Colonic mucosa (tissue), 4 donors: ENCODE measurements at regions of chr20 and their contacts with region 1.

Region 1: DNA sequence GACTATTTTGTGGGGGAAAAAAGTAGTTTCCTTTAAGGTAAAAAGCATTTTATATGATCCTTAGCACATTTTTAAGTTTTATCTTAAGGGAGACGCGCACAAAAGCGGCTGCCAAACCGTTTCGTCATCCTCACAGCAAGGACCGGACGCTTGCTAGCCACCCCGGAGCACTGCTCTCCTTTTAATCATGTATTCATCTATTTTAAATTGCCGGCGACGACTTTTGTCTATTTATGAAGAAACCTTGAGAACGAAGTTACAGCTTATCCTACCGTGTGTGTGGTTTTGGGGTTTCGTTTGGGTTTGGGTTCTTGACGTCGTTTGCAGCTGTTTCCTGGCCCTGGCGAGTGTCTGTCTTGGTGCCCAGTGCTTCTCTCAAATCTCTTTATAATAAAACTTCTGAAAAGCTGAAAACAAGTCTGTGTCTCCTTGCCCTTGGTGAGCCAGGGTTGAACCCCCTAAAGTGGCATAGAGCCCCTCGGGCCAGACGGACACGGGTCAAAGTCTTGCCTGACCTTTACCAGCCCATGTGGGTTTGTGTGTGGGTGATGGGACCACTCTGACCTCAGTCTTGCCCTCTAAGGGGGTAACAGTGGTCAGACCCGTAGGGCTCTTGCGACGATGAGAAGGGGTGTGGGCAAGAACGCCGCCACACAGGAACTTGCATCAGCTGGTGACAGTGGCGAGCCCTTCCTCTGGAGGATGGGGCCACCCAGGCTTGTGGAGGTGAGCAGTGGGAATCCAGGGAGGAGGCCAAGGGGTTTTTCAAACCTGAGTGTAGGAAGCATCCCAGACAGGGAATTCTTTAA is 117.6 kb downstream of the JPH2 start:
- DNase-seq: no peak
- H3K4me3 ChIP-seq: no peak overlapping the region
- H3K27ac ChIP-seq: peak overlapping the region; percentile 27
- H3K4me1 ChIP-seq: no peaks in the 10 kb centered on the region
- H3K27me3 ChIP-seq: no peaks in the 10 kb centered on the region
- CTCF ChIP-seq: no peak

Region 2: DNA sequence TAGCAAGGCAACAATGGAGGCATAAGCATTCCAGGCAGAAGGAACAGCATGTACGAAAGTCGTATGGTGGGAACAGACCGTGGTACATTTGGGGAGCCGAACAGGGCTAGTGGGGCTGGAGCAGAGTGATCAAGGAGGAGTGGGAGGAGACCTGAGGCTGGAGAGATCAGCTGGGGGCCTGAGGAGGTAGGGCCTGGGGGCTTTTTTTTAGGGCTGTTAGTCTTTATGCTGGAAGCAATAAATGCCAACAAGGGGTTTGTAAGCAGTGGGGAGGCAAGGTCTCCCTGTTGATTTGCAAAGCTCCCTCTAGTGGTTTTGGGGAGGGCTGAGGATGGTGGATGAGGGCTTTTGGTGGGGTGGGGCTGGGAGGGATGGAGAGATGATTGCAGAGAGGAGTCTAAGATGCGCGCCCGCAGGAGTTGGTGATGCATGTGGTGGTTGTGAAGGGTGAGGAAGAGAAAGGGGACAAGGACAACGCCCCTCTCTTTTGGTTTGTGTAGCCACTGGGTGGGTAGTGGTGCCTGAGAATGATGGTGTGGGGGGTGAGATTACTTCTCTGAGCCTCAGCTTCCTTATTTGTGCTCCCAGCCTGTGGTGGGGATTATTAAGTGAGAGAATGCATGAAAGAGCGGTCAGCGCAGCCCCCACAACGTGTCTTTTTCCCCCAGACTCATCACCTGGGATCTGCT is 228.9 kb before region 1 on chr20:
- intact Hi-C with region 1: loop called (anchors 10 kb)
- DNase-seq: peak; percentile 19
- H3K4me3 ChIP-seq: no peak overlapping the region
- H3K27ac ChIP-seq: no peak overlapping the region
- H3K4me1 ChIP-seq: no peaks in the 10 kb centered on the region
- H3K27me3 ChIP-seq: no peaks in the 10 kb centered on the region
- CTCF ChIP-seq: no peak

Region 3: DNA sequence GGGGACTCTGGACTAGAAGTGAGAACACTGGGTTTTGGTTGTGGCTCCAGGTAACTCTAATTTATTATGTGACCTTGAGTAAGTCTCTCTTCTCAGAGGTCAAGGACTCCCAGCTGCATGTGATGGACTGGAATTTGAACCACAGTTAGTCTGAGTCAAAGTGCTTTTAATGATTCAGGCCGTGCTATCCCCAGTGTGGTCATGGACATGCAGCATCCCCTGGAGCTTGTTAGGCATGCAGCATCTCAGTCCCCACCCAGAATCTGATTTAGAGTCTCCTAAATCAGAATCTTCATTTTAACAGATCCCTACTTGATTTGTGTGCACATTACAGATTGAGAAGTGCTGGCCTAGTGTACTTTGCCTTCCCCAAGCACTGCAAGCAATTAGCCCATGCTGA is 80.5 kb before region 1 on chr20:
- intact Hi-C with region 1: no loop called
- DNase-seq: no peak
- H3K4me3 ChIP-seq: no peak overlapping the region
- H3K27ac ChIP-seq: no peak overlapping the region
- H3K4me1 ChIP-seq: peaks cover 4% of the 10 kb centered on the region
- H3K27me3 ChIP-seq: no peaks in the 10 kb centered on the region
- CTCF ChIP-seq: no peak

Region 4: DNA sequence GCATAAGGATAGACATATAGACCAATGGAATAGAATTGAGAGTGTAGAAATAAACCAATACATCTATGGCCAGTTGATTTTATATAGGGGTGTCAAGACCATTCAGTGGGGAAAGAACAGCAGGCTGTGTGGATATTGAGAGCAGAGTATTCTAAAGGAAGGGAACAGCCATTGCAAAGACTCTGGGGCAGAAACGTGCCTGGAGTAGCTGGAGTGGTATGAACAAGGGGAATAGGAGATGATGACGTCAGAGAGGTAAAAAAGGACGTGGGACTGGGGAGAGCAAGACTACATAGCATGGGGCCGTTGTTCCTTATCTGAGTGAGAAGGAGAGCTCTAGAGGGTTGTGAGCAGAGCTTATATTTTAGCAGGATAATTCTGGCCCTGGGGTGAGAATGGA is 69.6 kb before region 1 on chr20:
- intact Hi-C with region 1: no loop called
- DNase-seq: no peak
- H3K4me3 ChIP-seq: no peak overlapping the region
- H3K27ac ChIP-seq: no peak overlapping the region
- H3K4me1 ChIP-seq: no peaks in the 10 kb centered on the region
- H3K27me3 ChIP-seq: no peaks in the 10 kb centered on the region
- CTCF ChIP-seq: no peak